Activated naive CD4-positive, alpha-beta T cell treated with anti-CD3 and anti-CD28 coated beads for 36 hours (primary cell): ENCODE measurements at regions of chr10 and their contacts with region 1.

Region 1: GRCh38 chr10:100508691-100509150 is 10.9 kb downstream of the SEC31B start:
- DNase-seq: peak; percentile 68
- H3K4me3 Mint-ChIP-seq: peak overlapping the region; percentile 50
- H3K27ac Mint-ChIP-seq: peak overlapping the region; percentile 89
- H3K4me1 Mint-ChIP-seq: peaks cover 70% of the 10 kb centered on the region
- H3K27me3 Mint-ChIP-seq: no peaks in the 10 kb centered on the region

Region 2: GRCh38 chr10:99845837-99846382 is 662.8 kb before region 1 on chr10:
- CTCF ChIA-PET with region 1: no interaction called
- intact Hi-C with region 1: loop called (anchors 5 kb)
- DNase-seq: peak; percentile 82
- H3K4me3 Mint-ChIP-seq: no peak overlapping the region
- H3K27ac Mint-ChIP-seq: no peak overlapping the region
- H3K4me1 Mint-ChIP-seq: peaks cover 4% of the 10 kb centered on the region
- H3K27me3 Mint-ChIP-seq: no peaks in the 10 kb centered on the region

Region 3: DNA sequence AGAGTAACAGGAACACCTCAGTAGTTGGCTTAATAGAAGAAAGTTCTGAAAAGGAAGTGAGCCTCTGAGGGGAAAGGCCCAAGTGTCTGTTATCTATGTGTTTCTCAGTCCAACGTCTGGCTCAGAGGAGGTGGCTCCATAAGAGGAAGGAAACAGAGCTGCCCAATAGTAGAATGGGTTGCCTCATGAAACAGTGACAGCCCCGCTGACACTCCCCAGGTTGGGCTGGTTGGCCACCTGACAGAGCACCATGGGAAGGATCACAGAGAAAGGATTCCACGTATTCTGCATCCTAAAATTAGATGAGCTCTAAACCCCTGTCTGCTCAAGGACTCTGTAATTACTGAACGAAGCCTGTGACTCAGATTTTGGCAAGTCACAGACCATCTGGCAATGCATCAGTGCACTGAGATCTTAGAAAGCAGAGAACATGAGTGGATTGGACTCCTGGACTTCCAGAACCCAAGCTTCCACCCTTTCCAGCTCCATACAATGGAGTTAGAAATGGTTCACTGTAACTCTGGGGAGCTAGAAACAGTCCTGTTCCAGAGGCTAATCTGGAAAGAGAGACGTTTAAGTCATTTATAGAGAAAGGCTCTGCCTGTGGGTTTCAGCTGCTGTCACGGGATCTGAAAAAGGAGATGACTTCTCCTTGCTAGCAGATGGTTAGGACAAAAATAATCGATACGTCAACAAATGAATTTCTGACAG is 181.6 kb before region 1 on chr10:
- CTCF ChIA-PET with region 1: interaction called, 4 read pairs
- intact Hi-C with region 1: loop called (anchors 1 kb)
- DNase-seq: peak; percentile 82
- H3K4me3 Mint-ChIP-seq: peak overlapping the region; percentile 5
- H3K27ac Mint-ChIP-seq: peak overlapping the region; percentile 80
- H3K4me1 Mint-ChIP-seq: peaks cover 16% of the 10 kb centered on the region
- H3K27me3 Mint-ChIP-seq: peaks cover 4% of the 10 kb centered on the region

Region 4: DNA sequence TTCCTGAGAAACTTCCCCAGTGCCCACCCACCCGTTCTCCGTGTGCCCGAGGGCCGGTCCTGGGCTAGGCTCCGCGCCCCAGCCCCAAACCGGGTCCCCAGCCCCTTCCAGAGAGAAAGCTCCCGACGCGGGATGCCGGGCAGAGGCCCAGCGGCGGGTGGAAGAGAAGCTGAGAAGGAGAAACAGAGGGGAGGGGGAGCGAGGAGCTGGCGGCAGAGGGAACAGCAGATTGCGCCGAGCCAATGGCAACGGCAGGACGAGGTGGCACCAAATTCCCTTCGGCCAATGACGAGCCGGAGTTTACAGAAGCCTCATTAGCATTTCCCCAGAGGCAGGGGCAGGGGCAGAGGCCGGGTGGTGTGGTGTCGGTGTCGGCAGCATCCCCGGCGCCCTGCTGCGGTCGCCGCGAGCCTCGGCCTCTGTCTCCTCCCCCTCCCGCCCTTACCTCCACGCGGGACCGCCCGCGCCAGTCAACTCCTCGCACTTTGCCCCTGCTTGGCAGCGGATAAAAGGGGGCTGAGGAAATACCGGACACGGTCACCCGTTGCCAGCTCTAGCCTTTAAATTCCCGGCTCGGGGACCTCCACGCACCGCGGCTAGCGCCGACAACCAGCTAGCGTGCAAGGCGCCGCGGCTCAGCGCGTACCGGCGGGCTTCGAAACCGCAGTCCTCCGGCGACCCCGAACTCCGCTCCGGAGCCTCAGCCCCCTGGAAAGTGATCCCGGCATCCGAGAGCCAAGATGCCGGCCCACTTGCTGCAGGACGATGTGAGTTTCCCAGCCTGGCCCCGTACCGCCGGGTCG is 161.8 kb before region 1 on chr10 and contains the start of gene SCD:
- CTCF ChIA-PET with region 1: interaction called, 18 read pairs
- intact Hi-C with region 1: loop called (anchors 1 kb)
- DNase-seq: peak; percentile 95
- H3K4me3 Mint-ChIP-seq: peak within 1 kb of the TSS; percentile 97
- H3K27ac Mint-ChIP-seq: peak within 1 kb of the TSS; percentile 87
- H3K4me1 Mint-ChIP-seq: peaks cover 45% of the 10 kb centered on the region
- H3K27me3 Mint-ChIP-seq: no peaks in the 10 kb centered on the region
- total RNA-seq, gene SCD: 161 to 169 TPM

Region 5: DNA sequence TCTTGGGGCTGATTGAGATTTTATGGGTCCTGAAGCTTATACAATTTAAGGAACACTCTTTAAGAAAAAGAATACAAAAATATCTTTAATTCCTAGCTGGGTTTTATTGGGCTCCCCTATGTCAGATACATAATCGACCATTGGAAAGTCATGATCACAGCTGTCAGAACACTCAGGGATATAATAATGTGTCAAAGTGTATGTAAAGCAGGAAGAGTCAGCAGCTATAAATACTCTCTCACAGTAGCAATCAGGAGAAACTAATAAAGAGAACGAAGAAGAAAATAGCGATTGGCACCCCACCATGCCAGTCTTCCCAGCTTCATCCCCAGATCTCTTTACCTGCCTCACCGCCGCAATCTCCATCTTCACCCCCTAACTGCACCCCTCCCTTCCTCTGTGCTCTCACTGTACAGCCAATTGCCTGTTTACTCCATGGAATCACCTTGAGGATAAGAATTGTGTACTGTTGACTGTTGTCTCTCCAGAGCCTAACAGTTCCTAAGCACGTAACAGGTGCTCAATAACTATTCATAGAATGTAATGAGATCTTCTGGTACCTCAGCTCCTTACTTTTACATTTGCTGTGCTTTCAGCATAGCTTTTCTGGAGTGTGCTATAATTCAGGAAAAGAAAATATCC is 69.9 kb before region 1 on chr10:
- CTCF ChIA-PET with region 1: interaction called, 73 read pairs
- intact Hi-C with region 1: loop called (anchors 1 kb)
- DNase-seq: no peak
- H3K4me3 Mint-ChIP-seq: no peak overlapping the region
- H3K27ac Mint-ChIP-seq: no peak overlapping the region
- H3K4me1 Mint-ChIP-seq: no peaks in the 10 kb centered on the region
- H3K27me3 Mint-ChIP-seq: no peaks in the 10 kb centered on the region

Region 6: DNA sequence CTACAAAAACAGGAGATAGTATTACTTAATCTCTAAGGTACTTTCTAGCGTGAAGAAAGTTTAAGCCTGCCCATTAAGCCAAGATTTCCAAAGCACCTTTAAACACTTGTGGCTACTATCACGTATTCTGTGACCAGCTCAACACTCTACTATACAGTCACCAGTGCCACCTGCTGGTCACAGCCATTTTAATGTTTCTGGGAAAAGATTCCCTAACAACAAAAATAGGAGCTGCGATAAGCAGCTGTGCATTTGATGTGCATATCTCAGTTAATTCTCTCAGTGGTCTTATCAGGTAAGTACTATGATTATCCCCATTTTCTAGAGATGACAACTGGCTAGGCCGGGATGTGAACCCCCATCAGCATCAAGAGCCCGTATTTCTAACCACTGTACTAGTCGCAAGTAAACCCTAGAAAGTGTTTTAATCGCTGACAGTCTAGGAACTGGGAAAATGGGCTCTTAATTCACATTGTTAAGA is 10.1 kb after region 1 on chr10:
- CTCF ChIA-PET with region 1: interaction called, 92 read pairs
- intact Hi-C with region 1: loop called (anchors 1 kb)
- DNase-seq: peak; percentile 86
- H3K4me3 Mint-ChIP-seq: no peak overlapping the region
- H3K27ac Mint-ChIP-seq: no peak overlapping the region
- H3K4me1 Mint-ChIP-seq: peaks cover 12% of the 10 kb centered on the region
- H3K27me3 Mint-ChIP-seq: peaks cover 1% of the 10 kb centered on the region

Region 7: GRCh38 chr10:100535715-100536353 is 27.1 kb after region 1 on chr10 and contains the start of gene HIF1AN:
- CTCF ChIA-PET with region 1: interaction called, 8 read pairs
- intact Hi-C with region 1: loop called (anchors 1 kb)
- DNase-seq: peak; percentile 95
- H3K4me3 Mint-ChIP-seq: no peak within 1 kb of the TSS
- H3K27ac Mint-ChIP-seq: peak within 1 kb of the TSS; percentile 26
- H3K4me1 Mint-ChIP-seq: peaks cover 18% of the 10 kb centered on the region
- H3K27me3 Mint-ChIP-seq: no peaks in the 10 kb centered on the region
- total RNA-seq, gene HIF1AN: 34.6 to 38.4 TPM